ENCODE measurements at regions of chr17 and their contacts with region 1.

Region 1: GRCh38 chr17:74625661-74626060 is 2.1 kb upstream of the CD300E start:
- DNase-seq: no peak
- H3K4me3 ChIP-seq: no peak overlapping the region
- H3K4me3 Mint-ChIP-seq: no peak overlapping the region
- H3K27ac ChIP-seq: no peak overlapping the region
- H3K27ac Mint-ChIP-seq: peak overlapping the region in 1 of 8 donors; percentile 20
- H3K4me1 ChIP-seq: no peaks in the 10 kb centered on the region
- H3K4me1 Mint-ChIP-seq: no peaks in the 10 kb centered on the region
- H3K27me3 ChIP-seq: peaks cover 15% of the 10 kb centered on the region
- H3K27me3 Mint-ChIP-seq: peaks cover 43 to 77% of the 10 kb centered on the region in 2 donors

Region 2: GRCh38 chr17:75372019-75372418 is 746.4 kb after region 1 on chr17:
- CTCF ChIA-PET with region 1: no interaction called
- POLR2A ChIA-PET with region 1: interaction called, 10 read pairs
- DNase-seq: no peak
- H3K4me3 ChIP-seq: no peak overlapping the region
- H3K4me3 Mint-ChIP-seq: peak overlapping the region in 6 of 7 donors; percentile 21 to 70 (median 38)
- H3K27ac ChIP-seq: no peak overlapping the region
- H3K27ac Mint-ChIP-seq: peak overlapping the region in 7 of 8 donors; percentile 2 to 96 (median 71)
- H3K4me1 ChIP-seq: peaks cover 29% of the 10 kb centered on the region
- H3K4me1 Mint-ChIP-seq: peaks cover 61 to 89% (median 72%) of the 10 kb centered on the region in 3 donors
- H3K27me3 ChIP-seq: no peaks in the 10 kb centered on the region
- H3K27me3 Mint-ChIP-seq: no peaks in the 10 kb centered on the region